ENCODE measurements at regions of chr5 and their contacts with region 1.

Region 1: DNA sequence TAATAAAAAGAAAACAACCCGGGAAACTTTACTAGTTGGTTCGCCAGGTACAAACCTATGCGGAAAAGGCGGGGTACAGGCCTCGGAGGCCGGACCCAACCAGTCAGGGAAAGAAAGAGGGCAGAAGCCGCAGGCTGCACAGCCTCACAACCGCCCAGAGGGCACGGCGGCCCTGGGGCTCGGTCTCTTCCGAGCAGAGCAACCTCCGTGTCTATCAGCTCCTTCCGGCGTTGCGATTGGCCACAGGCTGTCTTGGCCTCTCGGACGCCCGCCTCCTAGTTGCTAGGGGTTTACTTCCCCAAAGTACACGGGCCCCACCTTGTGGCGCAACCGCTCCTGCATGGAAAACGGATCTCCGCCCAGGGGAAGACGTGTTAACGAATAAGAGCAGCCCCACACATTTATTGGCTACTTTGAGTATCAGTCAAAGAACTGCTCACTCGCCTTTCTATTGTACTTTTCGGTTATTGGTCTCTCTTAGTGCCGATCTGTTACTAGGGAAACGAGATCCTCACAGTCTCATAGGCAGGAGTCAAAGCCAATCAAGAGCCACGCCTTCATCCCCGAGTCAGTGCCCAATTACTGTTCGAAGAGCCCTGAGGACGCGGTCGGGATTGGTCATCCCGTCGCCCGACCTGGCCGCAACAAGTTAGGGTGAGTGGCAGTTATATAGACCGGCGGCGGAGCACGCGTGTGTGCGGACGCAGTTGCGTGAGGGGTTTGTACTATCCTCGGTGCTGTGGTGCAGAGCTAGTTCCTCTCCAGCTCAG is at the start of gene G3BP1:
- DNase-seq: peak; percentile 100
- ATAC-seq: peak; percentile 82
- H3K4me3 Mint-ChIP-seq: peak within 1 kb of the TSS; percentile 83
- H3K27ac Mint-ChIP-seq: peak within 1 kb of the TSS; percentile 92
- H3K4me1 Mint-ChIP-seq: peaks cover 34% of the 10 kb centered on the region
- H3K27me3 Mint-ChIP-seq: no peaks in the 10 kb centered on the region
- total RNA-seq, gene G3BP1: 192 to 279 TPM

Region 2: DNA sequence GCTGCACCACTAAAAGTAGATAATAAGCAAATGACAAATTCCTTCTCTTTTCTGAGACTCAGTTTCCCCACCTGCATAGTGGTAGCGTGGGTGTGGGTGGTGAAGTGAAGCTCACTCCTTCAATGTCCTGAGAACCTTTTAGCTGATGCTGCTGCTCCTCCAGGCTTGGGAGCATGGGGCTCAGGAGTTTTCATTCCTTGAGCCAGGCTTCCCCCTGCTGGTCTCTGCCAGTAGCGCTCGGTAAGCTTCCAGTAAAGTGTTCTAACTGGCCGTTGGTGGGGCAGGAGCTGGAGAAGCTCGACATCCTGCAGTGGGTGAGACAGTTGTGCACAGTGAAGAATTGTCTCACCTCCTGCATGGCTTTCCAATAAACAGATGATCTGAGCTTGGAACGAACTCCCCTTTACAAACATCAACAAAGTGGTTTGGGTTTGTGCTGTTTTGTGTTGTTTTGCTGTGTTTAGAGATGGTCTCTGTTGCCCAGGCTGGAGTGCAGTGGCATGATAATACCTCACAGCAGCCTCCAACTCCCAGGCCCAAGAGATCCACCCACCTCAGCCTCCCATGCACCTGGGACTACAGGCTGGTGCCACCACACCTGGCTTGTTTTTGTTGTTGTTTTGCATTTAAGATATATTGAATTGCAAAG is 119.3 kb before region 1 on chr5:
- CTCF ChIA-PET with region 1: interaction called, 51 read pairs
- DNase-seq: peak; percentile 79
- ATAC-seq: peak; percentile 98
- H3K4me3 Mint-ChIP-seq: no peak overlapping the region
- H3K27ac Mint-ChIP-seq: no peak overlapping the region
- H3K4me1 Mint-ChIP-seq: no peaks in the 10 kb centered on the region
- H3K27me3 Mint-ChIP-seq: peaks cover 18% of the 10 kb centered on the region

Region 3: GRCh38 chr5:151740336-151740942 is 31.0 kb before region 1 on chr5:
- CTCF ChIA-PET with region 1: interaction called, 38 read pairs
- DNase-seq: peak; percentile 65
- ATAC-seq: peak; percentile 63
- H3K4me3 Mint-ChIP-seq: no peak overlapping the region
- H3K27ac Mint-ChIP-seq: no peak overlapping the region
- H3K4me1 Mint-ChIP-seq: peaks cover 18% of the 10 kb centered on the region
- H3K27me3 Mint-ChIP-seq: no peaks in the 10 kb centered on the region

Region 4: GRCh38 chr5:151751091-151751490 is 20.4 kb before region 1 on chr5:
- CTCF ChIA-PET with region 1: interaction called, 33 read pairs
- DNase-seq: no peak
- ATAC-seq: no peak
- H3K4me3 Mint-ChIP-seq: no peak overlapping the region
- H3K27ac Mint-ChIP-seq: no peak overlapping the region
- H3K4me1 Mint-ChIP-seq: peaks cover 43% of the 10 kb centered on the region
- H3K27me3 Mint-ChIP-seq: no peaks in the 10 kb centered on the region

Region 5: GRCh38 chr5:151758430-151759241 is 12.8 kb before region 1 on chr5 and contains the start of gene ATOX1:
- CTCF ChIA-PET with region 1: interaction called, 33 read pairs
- DNase-seq: peak; percentile 93
- ATAC-seq: peak; percentile 98
- H3K4me3 Mint-ChIP-seq: peak within 1 kb of the TSS; percentile 90
- H3K27ac Mint-ChIP-seq: peak within 1 kb of the TSS; percentile 90
- H3K4me1 Mint-ChIP-seq: peaks cover 31% of the 10 kb centered on the region
- H3K27me3 Mint-ChIP-seq: no peaks in the 10 kb centered on the region
- total RNA-seq, gene ATOX1: 72.6 to 78.1 TPM

Measured in activated CD8-positive, alpha-beta memory T cell treated with anti-CD3 and anti-CD28 coated beads, Interleukin-2, amount 10 ng/mL, durations not matched to agents 7 days and 5 days (primary cell).